WTC11 (cell line): ENCODE measurements at regions of chr13 and their contacts with region 1.

Region 1: GRCh38 chr13:38872693-38873092 is 117.9 kb downstream of the STOML3 start:
- DNase-seq: peak; percentile 74
- ATAC-seq: peak; percentile 83
- H3K4me3 Mint-ChIP-seq: no peak overlapping the region
- H3K27ac Mint-ChIP-seq: no peak overlapping the region
- H3K4me1 Mint-ChIP-seq: peaks cover 4% of the 10 kb centered on the region; the same call in 1 of the 2 replicates
- H3K27me3 Mint-ChIP-seq: no peaks in the 10 kb centered on the region
- CTCF ChIP-seq: peak; percentile 49

Region 2: GRCh38 chr13:38883783-38884182 is 11.1 kb after region 1 on chr13:
- CTCF ChIA-PET with region 1: interaction called, 18 read pairs
- POLR2A ChIA-PET with region 1: no interaction called
- DNase-seq: no peak
- ATAC-seq: peak; percentile 53
- H3K4me3 Mint-ChIP-seq: no peak overlapping the region
- H3K27ac Mint-ChIP-seq: no peak overlapping the region
- H3K4me1 Mint-ChIP-seq: peaks cover 13% of the 10 kb centered on the region
- H3K27me3 Mint-ChIP-seq: no peaks in the 10 kb centered on the region
- CTCF ChIP-seq: no peak

Region 3: GRCh38 chr13:39037880-39038568 is 165.3 kb after region 1 on chr13 and contains the starts of genes NHLRC3 and PROSER1:
- CTCF ChIA-PET with region 1: no interaction called
- POLR2A ChIA-PET with region 1: no interaction called
- DNase-seq: peak; percentile 88
- ATAC-seq: peak; percentile 86
- H3K4me3 Mint-ChIP-seq: peak within 1 kb of the TSS; percentile 92
- H3K27ac Mint-ChIP-seq: peak within 1 kb of the TSS; percentile 81
- H3K4me1 Mint-ChIP-seq: peaks cover 34% of the 10 kb centered on the region
- H3K27me3 Mint-ChIP-seq: no peaks in the 10 kb centered on the region
- CTCF ChIP-seq: no peak
- total RNA-seq, gene NHLRC3: 17.2 to 19.9 TPM (median 18.8 TPM) in 3 replicates
- total RNA-seq, gene PROSER1: 73.6 to 94.6 TPM (median 74.3 TPM) in 3 replicates